Activated CD4-positive, alpha-beta memory T cell treated with anti-CD3 and anti-CD28 coated beads for 36 hours (primary cell): ENCODE measurements at regions of chr3 and their contacts with region 1.

Region 1: GRCh38 chr3:81760924-81761903 is at the start of gene GBE1:
- DNase-seq: peak; percentile 92
- H3K4me3 Mint-ChIP-seq: peak within 1 kb of the TSS; percentile 91
- H3K27ac Mint-ChIP-seq: peak within 1 kb of the TSS; percentile 98
- H3K4me1 Mint-ChIP-seq: peaks cover 25% of the 10 kb centered on the region
- H3K27me3 Mint-ChIP-seq: no peaks in the 10 kb centered on the region
- total RNA-seq, gene GBE1: 30.5 to 30.6 TPM

Region 2: DNA sequence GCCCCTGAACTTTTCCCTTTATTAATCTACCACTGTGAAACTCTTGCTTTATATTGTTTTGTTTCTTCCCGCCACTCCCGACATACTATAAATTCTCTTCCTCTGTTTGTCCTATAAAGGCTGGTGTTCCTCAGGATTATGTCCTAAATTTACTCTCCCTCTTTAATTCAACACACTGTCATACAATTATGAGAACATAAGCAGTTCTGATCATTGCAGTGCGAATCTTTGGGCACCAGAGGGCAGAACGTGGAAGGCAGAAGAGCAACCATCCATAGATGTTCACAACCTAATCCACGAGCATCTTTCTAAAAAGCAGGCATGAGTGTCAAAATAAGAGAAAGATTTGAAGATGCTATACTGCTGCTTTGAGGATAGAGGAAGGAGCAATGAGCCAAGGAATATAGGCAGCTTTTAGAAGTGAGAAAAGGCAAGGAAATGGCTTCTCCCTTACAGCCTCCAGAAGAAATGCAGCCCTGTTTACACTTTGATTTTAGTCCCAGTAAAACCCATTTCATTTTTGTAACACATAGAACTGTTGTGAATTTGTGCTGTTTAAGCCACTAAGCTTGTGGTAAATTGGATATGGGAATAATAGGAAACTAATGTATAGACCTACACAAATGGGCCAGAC is 179.1 kb before region 1 on chr3:
- CTCF ChIA-PET with region 1: no interaction called
- POLR2A ChIA-PET with region 1: no interaction called
- intact Hi-C with region 1: loop called (anchors 1 kb)
- DNase-seq: peak; percentile 38
- H3K4me3 Mint-ChIP-seq: no peak overlapping the region
- H3K27ac Mint-ChIP-seq: no peak overlapping the region
- H3K4me1 Mint-ChIP-seq: no peaks in the 10 kb centered on the region
- H3K27me3 Mint-ChIP-seq: no peaks in the 10 kb centered on the region

Region 3: GRCh38 chr3:82133070-82133606 is 371.9 kb after region 1 on chr3:
- CTCF ChIA-PET with region 1: no interaction called
- POLR2A ChIA-PET with region 1: no interaction called
- intact Hi-C with region 1: loop called (anchors 5 kb)
- DNase-seq: peak; percentile 54
- H3K4me3 Mint-ChIP-seq: no peak overlapping the region
- H3K27ac Mint-ChIP-seq: no peak overlapping the region
- H3K4me1 Mint-ChIP-seq: no peaks in the 10 kb centered on the region
- H3K27me3 Mint-ChIP-seq: no peaks in the 10 kb centered on the region